AG04449 (cell line): ENCODE measurements at regions of chr17 and their contacts with region 1.

Region 1: GRCh38 chr17:77088455-77089123 is 52.2 kb upstream of the SEC14L1 start:
- DNase-seq: peak; percentile 81
- H3K4me3 ChIP-seq: peak overlapping the region; percentile 76
- CTCF ChIP-seq: peak; percentile 92

Region 2: GRCh38 chr17:77036807-77037381 is 51.7 kb before region 1 on chr17:
- CTCF ChIA-PET with region 1: no interaction called
- POLR2A ChIA-PET with region 1: no interaction called
- DNase-seq: no peak
- H3K4me3 ChIP-seq: no peak overlapping the region
- CTCF ChIP-seq: no peak

Region 3: GRCh38 chr17:77068915-77069314 is 19.7 kb before region 1 on chr17:
- CTCF ChIA-PET with region 1: interaction called, 39 read pairs
- POLR2A ChIA-PET with region 1: no interaction called
- DNase-seq: no peak
- H3K4me3 ChIP-seq: no peak overlapping the region
- CTCF ChIP-seq: no peak

Region 4: GRCh38 chr17:77124192-77124889 is 35.8 kb after region 1 on chr17:
- CTCF ChIA-PET with region 1: interaction called, 11 read pairs
- POLR2A ChIA-PET with region 1: interaction called, 6 read pairs
- DNase-seq: no peak
- H3K4me3 ChIP-seq: no peak overlapping the region
- CTCF ChIP-seq: no peak

Region 5: GRCh38 chr17:77208217-77208808 is 119.7 kb after region 1 on chr17:
- CTCF ChIA-PET with region 1: interaction called, 52 read pairs
- POLR2A ChIA-PET with region 1: interaction called, 3 read pairs
- DNase-seq: no peak
- H3K4me3 ChIP-seq: no peak overlapping the region
- CTCF ChIP-seq: peak; percentile 33

Region 6: DNA sequence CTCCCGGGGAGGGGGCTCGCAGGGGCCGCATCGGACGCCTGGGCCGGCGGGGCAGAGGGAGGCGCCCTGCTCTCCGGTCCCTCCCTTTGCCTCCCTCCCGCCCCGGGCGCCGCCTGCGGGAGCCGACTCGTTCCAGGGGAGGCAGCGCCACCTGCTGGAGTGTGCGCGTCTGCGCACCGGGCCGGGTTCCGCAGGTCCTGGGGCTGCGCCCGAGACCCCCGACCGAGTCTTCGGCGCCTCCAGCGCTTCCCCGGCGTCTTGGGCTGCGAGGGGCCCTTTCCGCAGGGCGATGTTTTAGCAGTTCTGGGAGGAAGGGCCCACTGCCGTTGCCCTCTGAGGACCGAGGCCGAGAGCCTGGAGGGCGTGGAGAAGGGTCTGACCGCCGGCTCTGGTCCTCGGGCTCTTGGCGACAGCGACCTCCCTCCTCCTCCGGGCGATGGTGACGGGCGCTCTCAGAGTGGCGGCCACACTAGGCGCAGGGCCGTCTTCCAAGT is 158.5 kb after region 1 on chr17:
- CTCF ChIA-PET with region 1: interaction called, 60 read pairs
- POLR2A ChIA-PET with region 1: no interaction called
- DNase-seq: no peak
- H3K4me3 ChIP-seq: peak overlapping the region; percentile 64
- CTCF ChIP-seq: peak; percentile 97

Region 7: GRCh38 chr17:77266891-77267341 is 178.3 kb after region 1 on chr17:
- CTCF ChIA-PET with region 1: no interaction called
- POLR2A ChIA-PET with region 1: no interaction called
- DNase-seq: no peak
- H3K4me3 ChIP-seq: no peak overlapping the region
- CTCF ChIP-seq: peak; percentile 55